Activated naive CD4-positive, alpha-beta T cell treated with anti-CD3 and anti-CD28 coated beads for 36 hours (primary cell): ENCODE measurements at regions of chr16 and their contacts with region 1.

Region 1: DNA sequence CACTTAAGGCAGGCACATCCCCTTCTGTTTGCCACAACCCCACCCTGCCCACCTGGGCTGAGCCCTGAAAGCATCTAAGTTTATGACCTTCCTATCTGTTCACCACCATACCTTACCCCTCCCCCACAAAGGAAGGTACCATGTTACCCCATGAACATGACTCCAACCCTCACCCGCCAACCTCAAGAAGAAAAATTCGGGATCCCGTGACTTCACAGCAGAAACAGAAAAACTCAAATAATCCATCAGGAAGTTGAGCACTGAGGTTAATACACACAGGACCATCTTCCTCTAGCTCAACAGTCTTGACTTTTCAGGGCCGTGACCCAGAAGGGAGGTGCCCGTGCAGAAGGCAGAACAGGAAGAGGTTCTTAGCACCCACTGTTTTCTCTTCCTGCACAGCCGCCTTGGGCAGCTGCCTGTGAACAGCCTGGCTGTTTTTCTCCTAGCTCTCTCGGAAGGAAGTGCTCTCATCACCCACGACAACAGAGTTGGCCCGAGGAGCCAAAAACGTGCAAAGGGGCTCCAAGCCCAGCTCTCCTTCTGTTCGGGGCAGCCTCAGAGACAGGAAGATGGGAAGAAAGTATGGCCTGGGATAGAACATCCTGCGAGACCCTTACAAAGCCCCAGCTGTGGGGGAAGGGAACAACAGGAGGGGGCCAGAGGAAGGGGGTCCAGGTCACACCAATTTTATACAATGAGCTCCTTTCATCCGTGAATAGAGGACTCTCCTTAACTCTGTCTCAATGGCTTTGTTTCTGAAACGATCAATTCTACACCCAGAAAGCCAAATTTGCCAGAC is 101.1 kb downstream of the XYLT1 start:
- DNase-seq: peak; percentile 78
- H3K4me3 Mint-ChIP-seq: peak overlapping the region; percentile 89
- H3K27ac Mint-ChIP-seq: peak overlapping the region; percentile 96
- H3K4me1 Mint-ChIP-seq: peaks cover 80% of the 10 kb centered on the region
- H3K27me3 Mint-ChIP-seq: no peaks in the 10 kb centered on the region

Region 2: GRCh38 chr16:17002565-17002964 is 367.1 kb before region 1 on chr16:
- CTCF ChIA-PET with region 1: no interaction called
- intact Hi-C with region 1: no loop called
- DNase-seq: no peak
- H3K4me3 Mint-ChIP-seq: no peak overlapping the region
- H3K27ac Mint-ChIP-seq: no peak overlapping the region
- H3K4me1 Mint-ChIP-seq: no peaks in the 10 kb centered on the region
- H3K27me3 Mint-ChIP-seq: no peaks in the 10 kb centered on the region

Region 3: GRCh38 chr16:17173281-17173680 is 196.3 kb before region 1 on chr16:
- CTCF ChIA-PET with region 1: no interaction called
- intact Hi-C with region 1: no loop called
- DNase-seq: no peak
- H3K4me3 Mint-ChIP-seq: no peak overlapping the region
- H3K27ac Mint-ChIP-seq: no peak overlapping the region
- H3K4me1 Mint-ChIP-seq: peaks cover 5% of the 10 kb centered on the region
- H3K27me3 Mint-ChIP-seq: no peaks in the 10 kb centered on the region

Region 4: DNA sequence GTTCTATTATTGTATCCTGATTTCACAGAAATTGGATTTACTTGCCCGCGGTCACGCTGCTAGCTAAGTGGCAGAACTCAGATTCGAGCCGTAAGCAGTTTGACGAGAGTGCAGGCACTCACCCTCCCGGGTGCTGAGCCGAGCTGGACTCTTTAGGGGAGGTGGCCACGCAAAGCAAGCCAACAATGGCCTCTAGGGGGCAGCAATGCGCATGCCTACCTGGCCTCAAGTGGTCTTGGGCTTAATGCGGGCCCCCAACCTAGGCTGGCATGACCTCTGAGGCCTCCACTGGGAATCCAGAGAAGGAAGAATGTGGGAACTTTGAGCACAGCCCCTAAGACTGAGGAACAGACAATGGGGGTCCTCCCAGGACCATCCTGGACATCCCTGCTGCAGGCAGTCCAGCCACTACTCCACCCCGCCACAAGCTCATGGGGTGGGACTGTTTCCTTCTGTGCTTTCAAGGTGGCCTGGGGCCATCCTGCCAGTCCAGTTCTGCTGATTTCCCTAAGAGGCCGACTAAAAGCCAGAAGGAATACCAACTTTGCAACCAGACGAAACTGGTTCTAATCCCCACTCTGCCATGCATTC is 175.3 kb before region 1 on chr16:
- CTCF ChIA-PET with region 1: no interaction called
- intact Hi-C with region 1: loop called (anchors 10 kb)
- DNase-seq: peak; percentile 72
- H3K4me3 Mint-ChIP-seq: no peak overlapping the region
- H3K27ac Mint-ChIP-seq: no peak overlapping the region
- H3K4me1 Mint-ChIP-seq: no peaks in the 10 kb centered on the region
- H3K27me3 Mint-ChIP-seq: no peaks in the 10 kb centered on the region

Region 5: GRCh38 chr16:17448640-17449638 is 79.3 kb after region 1 on chr16:
- CTCF ChIA-PET with region 1: no interaction called
- intact Hi-C with region 1: loop called (anchors 2 kb)
- DNase-seq: peak; percentile 71
- H3K4me3 Mint-ChIP-seq: peak overlapping the region; percentile 43
- H3K27ac Mint-ChIP-seq: peak overlapping the region; percentile 62
- H3K4me1 Mint-ChIP-seq: peaks cover 37% of the 10 kb centered on the region
- H3K27me3 Mint-ChIP-seq: no peaks in the 10 kb centered on the region

Region 6: GRCh38 chr16:18789850-18790724 is 1420.5 kb after region 1 on chr16 and contains the start of gene RPS15A:
- CTCF ChIA-PET with region 1: no interaction called
- intact Hi-C with region 1: loop called (anchors 5 kb)
- DNase-seq: peak; percentile 96
- H3K4me3 Mint-ChIP-seq: peak within 1 kb of the TSS; percentile 94
- H3K27ac Mint-ChIP-seq: peak within 1 kb of the TSS; percentile 96
- H3K4me1 Mint-ChIP-seq: peaks cover 45% of the 10 kb centered on the region
- H3K27me3 Mint-ChIP-seq: no peaks in the 10 kb centered on the region
- total RNA-seq, gene RPS15A: 2,432 to 2,476 TPM